Heart left ventricle (tissue), 16 donors: ENCODE measurements at regions of chrX and their contacts with region 1.

Region 1: DNA sequence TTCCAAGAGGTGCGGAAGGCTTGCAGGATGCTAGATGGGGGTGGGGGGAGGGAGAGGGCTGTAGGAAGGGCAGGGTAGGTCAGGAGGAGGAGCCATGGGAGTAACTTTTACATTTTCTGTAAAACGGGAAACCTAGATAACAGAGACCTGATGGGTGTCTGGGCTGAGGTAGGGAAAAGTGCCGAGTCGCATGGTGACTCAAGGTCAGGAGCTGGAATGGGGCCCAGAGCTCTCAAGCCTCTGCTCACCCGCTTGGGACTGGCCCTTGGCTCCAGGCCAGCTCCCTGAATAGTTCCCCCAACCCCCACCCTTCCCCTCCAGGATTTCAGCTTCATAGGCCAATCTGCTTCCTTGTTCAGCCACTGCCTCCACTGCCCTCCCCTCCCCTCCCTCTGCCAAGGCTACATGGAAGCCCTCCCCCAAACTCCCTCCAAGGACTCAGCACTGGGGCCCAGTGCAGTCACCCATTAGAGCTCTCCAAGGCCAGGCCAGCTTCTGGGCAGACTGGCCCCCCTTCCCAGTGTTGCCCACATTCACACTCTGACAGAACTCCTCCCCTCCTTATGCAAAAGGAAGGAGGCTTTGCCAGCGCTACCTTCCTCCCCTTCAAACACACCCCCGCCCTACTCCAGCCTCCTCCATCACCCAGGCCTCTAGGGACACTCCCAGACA is 43.6 kb downstream of the TSC22D3 start:
- DNase-seq: peak; percentile 88 to 94 (median 90)
- ATAC-seq: peak; percentile 80 to 91 (median 83)
- H3K4me3 ChIP-seq: no peak overlapping the region
- H3K27ac ChIP-seq: peak overlapping the region; percentile 32 to 81 (median 75)
- H3K4me1 ChIP-seq: peaks cover 3 to 83% (median 50%) of the 10 kb centered on the region in 12 donors
- H3K27me3 ChIP-seq: peaks cover 0 to 6% (median 0%) of the 10 kb centered on the region in 9 donors
- CTCF ChIP-seq: no peak
- POLR2A ChIP-seq: no peak

Region 2: GRCh38 chrX:106397801-106398538 is 1334.0 kb before region 1 on chrX:
- intact Hi-C with region 1: no loop called
- DNase-seq: no peak
- ATAC-seq: peak in 1 of 4 donors; percentile 31
- H3K4me3 ChIP-seq: no peak overlapping the region
- H3K27ac ChIP-seq: no peak overlapping the region
- H3K4me1 ChIP-seq: no peaks in the 10 kb centered on the region
- H3K27me3 ChIP-seq: peaks cover 0 to 10% (median 0%) of the 10 kb centered on the region in 9 donors
- CTCF ChIP-seq: peak in 5 of 12 donors; percentile 9 to 35 (median 22)
- POLR2A ChIP-seq: no peak

Region 3: DNA sequence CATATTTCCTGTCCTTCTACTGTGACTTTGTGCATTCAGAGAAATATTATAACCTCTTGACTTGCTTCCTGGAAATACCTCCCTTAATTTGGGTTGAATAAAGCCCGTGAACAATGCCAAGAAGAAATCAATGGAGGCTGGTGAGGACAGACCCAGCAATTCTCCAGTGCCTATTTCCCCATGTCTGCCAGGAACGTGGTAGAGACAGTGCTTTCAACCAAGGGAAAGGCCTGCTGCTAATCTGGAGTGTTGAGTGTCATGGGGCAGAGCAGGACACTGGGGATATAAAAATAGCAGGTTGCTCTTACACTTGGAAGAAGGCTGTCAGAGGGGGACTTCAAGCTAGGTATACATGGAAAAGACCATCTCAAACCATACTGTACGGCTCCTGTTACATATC is 23.8 kb after region 1 on chrX:
- intact Hi-C with region 1: loop called in 1 of 10 experiments (anchors 5 kb)
- DNase-seq: peak in 2 of 5 donors; percentile 25 to 51
- ATAC-seq: peak; percentile 76 to 90 (median 81)
- H3K4me3 ChIP-seq: no peak overlapping the region
- H3K27ac ChIP-seq: peak overlapping the region; percentile 27 to 88 (median 74)
- H3K4me1 ChIP-seq: peaks cover 0 to 55% (median 31%) of the 10 kb centered on the region in 12 donors
- H3K27me3 ChIP-seq: peaks cover 0 to 9% (median 0%) of the 10 kb centered on the region in 9 donors
- CTCF ChIP-seq: no peak
- POLR2A ChIP-seq: no peak

Region 4: DNA sequence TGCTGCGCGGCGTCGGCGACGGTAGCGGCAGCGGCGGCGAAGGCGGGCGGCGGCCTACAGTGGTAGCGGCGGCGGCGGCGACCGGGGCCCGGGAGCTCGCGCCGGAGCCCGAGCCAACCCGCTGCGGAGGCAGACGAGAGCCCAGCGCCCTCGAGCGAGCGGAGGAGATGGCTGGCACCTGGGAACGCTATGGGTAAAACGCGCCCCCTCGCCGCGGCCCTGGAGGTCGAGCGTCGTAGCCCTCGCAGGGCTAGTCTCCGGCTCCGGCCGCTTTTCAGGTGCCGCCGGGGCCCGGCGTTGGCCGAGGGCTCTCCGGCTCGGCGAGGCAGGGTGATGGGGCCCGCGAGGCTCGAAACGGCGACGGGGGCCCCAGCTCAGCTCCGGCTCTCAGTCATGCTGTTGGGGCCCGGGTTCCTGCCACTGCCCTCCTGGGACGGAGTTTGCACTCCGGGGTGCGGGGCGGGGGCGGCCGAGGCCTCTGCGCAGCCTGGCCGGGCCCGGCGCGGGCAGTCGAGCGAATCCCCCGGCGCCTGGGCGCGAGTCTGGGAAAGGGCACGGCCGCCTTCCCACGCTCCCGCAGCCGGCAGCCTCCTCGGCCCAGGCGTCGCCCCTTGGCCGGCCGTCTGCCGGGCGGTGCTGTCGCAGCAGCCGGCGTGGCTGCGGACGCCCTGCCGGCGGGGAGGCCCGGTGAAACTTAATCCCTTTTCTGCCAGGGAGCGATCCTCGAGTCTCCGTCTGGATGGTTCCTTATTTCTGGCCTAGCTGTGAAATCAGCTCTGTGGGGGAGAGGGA is 94.5 kb after region 1 on chrX:
- intact Hi-C with region 1: loop called in 1 of 10 experiments (anchors 10 kb)
- DNase-seq: peak; percentile 12 to 63 (median 32)
- ATAC-seq: peak in 3 of 4 donors; percentile 47 to 79 (median 76)
- H3K4me3 ChIP-seq: peak overlapping the region; percentile 31 to 70 (median 58)
- H3K27ac ChIP-seq: peak overlapping the region; percentile 73 to 90 (median 84)
- H3K4me1 ChIP-seq: peaks cover 0 to 5% (median 0%) of the 10 kb centered on the region in 12 donors
- H3K27me3 ChIP-seq: peaks cover 0 to 55% (median 0%) of the 10 kb centered on the region in 9 donors
- CTCF ChIP-seq: no peak
- POLR2A ChIP-seq: no peak

Region 5: GRCh38 chrX:108516184-108516583 is 784.2 kb after region 1 on chrX:
- intact Hi-C with region 1: no loop called
- DNase-seq: no peak
- ATAC-seq: no peak
- H3K4me3 ChIP-seq: no peak overlapping the region
- H3K27ac ChIP-seq: no peak overlapping the region
- H3K4me1 ChIP-seq: no peaks in the 10 kb centered on the region
- H3K27me3 ChIP-seq: peaks cover 0 to 11% (median 0%) of the 10 kb centered on the region in 9 donors
- CTCF ChIP-seq: no peak
- POLR2A ChIP-seq: no peak